Ovary (tissue), 10 donors: ENCODE measurements at regions of chr10 and their contacts with region 1.

Region 1: DNA sequence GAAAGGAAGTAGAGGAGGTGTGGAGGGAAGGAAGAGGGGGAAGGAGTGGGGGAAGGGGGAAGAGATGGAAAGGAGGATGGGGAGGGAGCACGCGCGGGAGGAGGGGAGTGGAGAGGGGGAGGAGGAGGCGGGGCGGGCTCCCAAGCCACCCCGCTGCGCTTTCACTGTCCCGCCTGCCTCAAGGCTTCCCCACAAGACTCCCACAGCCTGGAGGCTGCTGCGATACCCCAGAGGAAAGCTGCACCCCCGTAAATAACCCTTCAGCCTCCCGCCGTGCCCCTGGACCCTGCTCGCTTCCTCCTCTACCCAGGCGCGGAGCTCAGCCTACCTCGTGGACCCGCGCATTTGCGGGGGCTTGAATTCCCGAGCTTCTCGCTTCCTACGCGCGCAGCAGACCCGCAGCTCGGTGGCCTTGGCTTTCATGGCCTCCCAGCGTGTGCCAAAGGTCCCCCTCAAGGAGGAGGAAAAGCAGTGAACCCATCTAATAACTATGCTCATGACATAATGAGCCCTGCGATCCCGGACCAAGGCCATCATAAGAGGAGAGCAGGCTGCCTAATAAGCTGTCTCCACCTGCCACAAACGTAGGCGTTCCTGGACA is at the start of gene C10orf67:
- DNase-seq: peak; percentile 69 to 79 (median 71)
- H3K4me3 ChIP-seq: peak within 1 kb of the TSS; percentile 52
- H3K27ac ChIP-seq: peak within 1 kb of the TSS in 1 of 2 donors; percentile 72
- H3K4me1 ChIP-seq: peaks cover 3% of the 10 kb centered on the region
- H3K27me3 ChIP-seq: no peaks in the 10 kb centered on the region
- CTCF ChIP-seq: no peak
- EP300 ChIP-seq: no peak
- POLR2A ChIP-seq: no peak
- total RNA-seq, gene C10orf67: 0.13 to 1.0 (median 0.35) TPM

Region 2: DNA sequence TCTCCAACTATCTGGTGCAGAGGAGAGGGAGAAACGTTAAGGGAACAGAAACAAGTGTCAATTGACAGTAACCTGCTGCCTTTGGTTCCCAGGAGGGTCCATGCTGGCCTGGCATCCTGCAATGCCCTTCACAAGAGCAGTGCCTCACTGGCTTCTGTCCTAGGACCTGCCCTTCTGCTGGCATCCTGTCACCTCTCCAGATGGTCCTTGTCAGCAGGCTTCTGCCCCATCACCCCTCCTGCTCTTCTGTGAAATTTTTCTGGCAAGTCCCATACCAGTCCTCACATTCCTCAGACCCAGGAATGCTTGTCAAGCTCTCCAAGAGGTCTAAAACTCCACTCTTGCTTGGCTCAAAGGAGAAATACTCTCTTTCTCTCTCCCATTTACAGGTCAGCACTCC is 33.9 kb before region 1 on chr10:
- intact Hi-C with region 1: no loop called
- DNase-seq: no peak
- H3K4me3 ChIP-seq: no peak overlapping the region
- H3K27ac ChIP-seq: no peak overlapping the region
- H3K4me1 ChIP-seq: peaks cover 2% of the 10 kb centered on the region
- H3K27me3 ChIP-seq: no peaks in the 10 kb centered on the region
- CTCF ChIP-seq: no peak
- EP300 ChIP-seq: no peak
- POLR2A ChIP-seq: no peak

Region 3: GRCh38 chr10:23438550-23439441 is 94.5 kb after region 1 on chr10 and contains the start of gene OTUD1:
- intact Hi-C with region 1: loop called in 1 of 4 experiments (anchors 10 kb)
- DNase-seq: peak; percentile 95 to 98 (median 97)
- H3K4me3 ChIP-seq: peak within 1 kb of the TSS; percentile 60
- H3K27ac ChIP-seq: peak within 1 kb of the TSS; percentile 89 to 94
- H3K4me1 ChIP-seq: peaks cover 5% of the 10 kb centered on the region
- H3K27me3 ChIP-seq: no peaks in the 10 kb centered on the region
- CTCF ChIP-seq: peak; percentile 8 to 17 (median 11)
- EP300 ChIP-seq: no peak
- POLR2A ChIP-seq: peak; percentile 61
- total RNA-seq, gene OTUD1: 13.3 to 23.9 (median 19.9) TPM